Calu3 (cell line): ENCODE measurements at regions of chr5 and their contacts with region 1.

Region 1: DNA sequence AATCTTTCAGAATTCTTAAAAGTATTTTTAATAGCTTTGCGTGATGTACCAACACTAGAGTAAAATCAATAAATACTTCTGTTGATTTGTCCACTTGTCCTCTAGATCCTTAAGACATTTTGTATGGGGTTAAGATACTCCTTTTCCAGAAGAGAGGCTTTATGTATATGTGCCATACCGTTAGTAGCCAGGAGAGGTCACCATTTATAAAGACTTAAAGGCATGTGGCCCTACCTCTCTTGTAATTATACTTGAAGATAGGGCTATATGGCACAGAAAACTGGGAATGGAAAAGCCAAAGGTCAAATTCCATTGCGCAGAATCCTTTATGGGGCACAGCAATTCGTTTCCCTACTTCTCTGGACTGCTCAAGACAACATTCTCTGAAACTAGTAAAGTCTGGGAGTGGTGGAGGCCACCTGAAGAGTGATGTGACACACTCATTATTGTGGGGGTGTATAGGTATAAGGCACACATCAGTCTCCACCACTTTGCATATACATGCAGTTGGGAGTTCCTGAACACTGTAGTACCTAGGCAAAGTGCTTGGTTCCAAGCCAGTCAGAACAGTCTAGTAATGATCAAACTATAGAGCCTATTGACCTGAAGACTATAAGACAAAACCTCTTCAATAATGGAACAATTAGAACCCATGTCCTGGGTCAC is 140.1 kb upstream of the FBXL17 start:
- DNase-seq: peak; percentile 68
- H3K4me3 Mint-ChIP-seq: no peak overlapping the region
- H3K27ac Mint-ChIP-seq: no peak overlapping the region
- H3K4me1 Mint-ChIP-seq: no peaks in the 10 kb centered on the region
- H3K27me3 Mint-ChIP-seq: peaks cover 43% of the 10 kb centered on the region
- CTCF ChIP-seq: peak; percentile 68

Region 2: GRCh38 chr5:108625654-108626053 is 103.7 kb after region 1 on chr5:
- CTCF ChIA-PET with region 1: no interaction called
- intact Hi-C with region 1: loop called (anchors 2 kb)
- DNase-seq: no peak
- H3K4me3 Mint-ChIP-seq: no peak overlapping the region
- H3K27ac Mint-ChIP-seq: no peak overlapping the region
- H3K4me1 Mint-ChIP-seq: peaks cover 6% of the 10 kb centered on the region
- H3K27me3 Mint-ChIP-seq: no peaks in the 10 kb centered on the region
- CTCF ChIP-seq: no peak